A673 (cell line): ENCODE measurements at regions of chr10 and their contacts with region 1.

Region 1: DNA sequence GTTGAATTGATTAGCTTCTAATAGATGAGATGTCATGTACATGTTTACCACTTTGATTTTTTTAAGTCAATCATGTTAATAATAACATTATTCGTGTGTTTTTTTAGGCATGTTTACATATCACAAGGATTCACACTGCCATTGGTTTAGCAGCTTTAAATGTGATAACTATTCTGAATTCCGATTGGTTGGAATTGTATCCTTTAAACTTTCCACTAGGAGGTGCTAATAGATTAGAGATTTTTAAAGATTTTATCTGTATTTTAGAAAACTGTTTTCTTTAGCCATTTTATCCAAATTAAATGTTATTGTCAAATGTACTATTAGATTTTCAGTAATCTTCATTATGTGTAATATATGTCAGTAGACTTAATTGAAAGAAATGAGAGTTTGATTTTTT is 83.2 kb downstream of the HECTD2 start:
- DNase-seq: peak; percentile 62
- H3K4me3 ChIP-seq: no peak overlapping the region
- H3K27ac ChIP-seq: no peak overlapping the region
- H3K4me1 ChIP-seq: peaks cover 8% of the 10 kb centered on the region
- H3K27me3 ChIP-seq: no peaks in the 10 kb centered on the region
- CTCF ChIP-seq: peak; percentile 61

Region 2: DNA sequence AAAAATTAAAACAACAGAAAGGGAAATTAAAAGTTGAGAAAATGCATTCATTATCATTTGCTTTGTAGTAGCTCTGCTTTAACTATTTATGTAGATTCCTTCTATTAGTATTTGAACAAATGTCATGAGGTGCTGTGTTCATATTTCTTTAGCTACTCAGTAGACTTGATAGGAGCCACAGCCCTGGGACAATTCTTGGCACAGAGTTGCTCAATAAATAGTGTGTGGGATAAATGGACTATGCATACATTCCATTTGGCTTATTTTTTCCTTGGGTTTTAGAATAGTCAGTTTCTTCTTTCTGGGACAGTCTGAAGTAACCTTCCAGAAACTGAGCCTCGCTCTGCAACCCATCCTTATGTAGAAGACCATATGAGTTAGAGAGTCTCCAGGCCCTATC is 608.1 kb before region 1 on chr10:
- CTCF ChIA-PET with region 1: no interaction called
- POLR2A ChIA-PET with region 1: no interaction called
- intact Hi-C with region 1: no loop called
- DNase-seq: no peak
- H3K4me3 ChIP-seq: no peak overlapping the region
- H3K27ac ChIP-seq: no peak overlapping the region
- H3K4me1 ChIP-seq: no peaks in the 10 kb centered on the region
- H3K27me3 ChIP-seq: no peaks in the 10 kb centered on the region
- CTCF ChIP-seq: no peak

Region 3: DNA sequence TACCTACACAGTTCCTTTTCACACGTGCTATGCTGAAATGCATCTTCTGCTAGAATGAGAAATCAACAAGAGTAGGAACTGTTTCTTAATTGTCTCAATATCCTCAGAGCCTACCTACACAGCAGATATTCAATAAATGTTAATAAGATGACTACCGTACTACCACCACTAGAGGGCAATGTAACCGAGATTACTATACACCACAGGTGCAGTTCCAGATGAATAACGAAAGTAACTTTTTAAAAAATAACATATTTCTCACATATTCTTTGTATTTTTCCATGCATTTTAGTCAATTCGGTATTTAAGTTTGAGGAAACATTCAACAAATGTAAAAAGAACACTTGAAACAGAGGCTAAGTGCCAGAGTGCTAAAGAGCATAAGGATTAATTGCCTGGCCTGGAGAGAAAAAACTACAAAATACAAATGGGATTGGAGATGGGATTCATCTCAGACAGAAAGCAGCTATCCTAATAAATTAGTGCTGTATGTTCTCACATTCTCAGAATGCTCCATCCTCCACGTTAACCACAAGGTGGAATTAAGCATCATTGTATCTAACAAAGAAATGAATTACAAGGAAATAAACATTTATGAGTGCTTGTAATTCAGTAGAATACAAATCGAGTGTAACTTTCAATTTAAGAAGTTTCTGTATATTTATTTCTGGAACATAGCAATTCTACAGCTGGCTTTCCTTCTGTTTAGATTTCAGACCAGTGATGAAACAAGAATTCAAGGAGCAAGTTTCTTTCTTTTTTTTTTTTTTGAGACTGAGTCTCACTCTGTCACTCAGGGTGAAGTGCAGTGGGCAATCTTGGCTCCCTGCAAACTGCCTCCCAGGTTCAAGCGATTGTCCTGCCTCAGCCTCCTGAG is 103.4 kb before region 1 on chr10:
- CTCF ChIA-PET with region 1: interaction called, 14 read pairs
- POLR2A ChIA-PET with region 1: no interaction called
- intact Hi-C with region 1: no loop called
- DNase-seq: peak; percentile 78
- H3K4me3 ChIP-seq: peak overlapping the region; percentile 24
- H3K27ac ChIP-seq: no peak overlapping the region
- H3K4me1 ChIP-seq: peaks cover 3% of the 10 kb centered on the region
- H3K27me3 ChIP-seq: no peaks in the 10 kb centered on the region
- CTCF ChIP-seq: peak; percentile 67

Region 4: DNA sequence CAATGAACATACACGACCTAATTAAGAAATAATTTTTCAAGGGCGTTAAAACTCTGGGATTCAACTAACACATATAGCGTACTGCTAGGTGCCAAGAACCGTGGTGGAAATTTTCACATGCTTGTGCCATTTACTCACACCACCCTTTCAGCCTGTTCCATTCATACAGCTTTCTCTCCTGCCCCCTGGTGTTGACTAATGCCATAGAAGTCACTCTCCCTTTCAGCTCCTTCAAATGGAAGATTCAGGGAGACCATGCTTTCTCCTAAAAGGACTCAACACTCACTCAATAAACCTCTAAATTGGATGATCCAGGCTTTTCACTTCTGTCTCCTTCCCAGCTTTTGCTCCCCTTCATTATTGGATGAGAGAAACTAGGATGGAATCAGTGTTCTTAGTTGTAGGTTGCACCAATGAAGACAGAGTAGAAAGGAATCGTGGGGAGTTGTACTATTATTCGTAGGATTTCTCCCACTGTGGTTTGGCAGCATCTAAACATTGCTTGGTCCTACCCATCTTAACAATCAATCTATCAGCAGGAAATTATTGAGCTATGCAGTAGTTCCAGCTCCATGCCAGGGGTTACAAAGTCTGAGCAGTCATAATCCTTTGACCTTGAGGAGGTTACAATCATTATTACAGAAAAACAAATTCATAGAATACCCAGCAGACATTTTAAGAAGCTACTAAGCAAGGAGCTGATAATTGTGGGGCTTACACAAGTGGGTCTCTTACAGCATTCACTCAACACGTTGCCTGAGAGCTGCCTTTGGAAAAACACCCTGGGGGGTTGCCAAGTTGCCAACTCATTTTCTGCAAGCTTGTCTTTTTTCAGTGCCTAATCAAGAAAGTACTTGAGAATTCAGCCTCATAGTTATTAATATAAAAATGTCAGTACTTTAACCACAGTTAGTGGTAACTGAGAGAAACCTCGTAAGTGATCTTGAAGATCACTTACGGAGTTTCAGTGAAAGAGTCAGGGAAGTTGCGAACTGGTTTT is 142.4 kb after region 1 on chr10:
- CTCF ChIA-PET with region 1: interaction called, 9 read pairs
- POLR2A ChIA-PET with region 1: interaction called, 3 read pairs
- intact Hi-C with region 1: loop called (anchors 1 kb)
- DNase-seq: peak; percentile 88
- H3K4me3 ChIP-seq: no peak overlapping the region
- H3K27ac ChIP-seq: no peak overlapping the region
- H3K4me1 ChIP-seq: peaks cover 7% of the 10 kb centered on the region
- H3K27me3 ChIP-seq: no peaks in the 10 kb centered on the region
- CTCF ChIP-seq: peak; percentile 83

Region 5: GRCh38 chr10:91694170-91694794 is 201.0 kb after region 1 on chr10:
- CTCF ChIA-PET with region 1: no interaction called
- POLR2A ChIA-PET with region 1: no interaction called
- intact Hi-C with region 1: loop called (anchors 1 kb)
- DNase-seq: peak; percentile 62
- H3K4me3 ChIP-seq: no peak overlapping the region
- H3K27ac ChIP-seq: no peak overlapping the region
- H3K4me1 ChIP-seq: no peaks in the 10 kb centered on the region
- H3K27me3 ChIP-seq: no peaks in the 10 kb centered on the region
- CTCF ChIP-seq: peak; percentile 83